MCF 10A (cell line): ENCODE measurements at regions of chr3 and their contacts with region 1.

Region 1: DNA sequence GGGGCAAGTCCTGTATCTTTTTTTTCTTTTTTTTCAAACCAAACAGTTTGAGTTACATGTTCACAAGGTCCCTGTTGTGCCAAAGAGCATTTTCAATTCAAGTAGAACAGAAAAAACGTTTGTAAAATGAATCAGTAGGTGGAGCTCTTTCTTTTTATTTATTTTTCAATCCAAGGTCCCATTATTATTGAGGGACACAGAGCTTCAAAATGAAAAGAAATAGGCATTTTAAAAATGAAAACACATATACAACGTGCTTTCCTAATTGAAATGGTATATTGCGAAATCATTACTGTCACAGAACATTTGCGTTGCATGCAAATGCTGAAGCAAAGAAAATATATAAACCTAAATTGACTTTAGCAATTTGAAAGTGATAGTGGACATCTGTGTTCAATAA is 711.0 kb downstream of the MECOM start:
- DNase-seq: peak; percentile 36
- H3K4me3 Mint-ChIP-seq: no peak overlapping the region
- H3K27ac Mint-ChIP-seq: no peak overlapping the region
- H3K4me1 Mint-ChIP-seq: peaks cover 5% of the 10 kb centered on the region
- H3K27me3 Mint-ChIP-seq: no peaks in the 10 kb centered on the region
- CTCF ChIP-seq: peak; percentile 45

Region 2: GRCh38 chr3:168865022-168865551 is 87.5 kb before region 1 on chr3:
- CTCF ChIA-PET with region 1: interaction called, 21 read pairs
- POLR2A ChIA-PET with region 1: interaction called, 5 read pairs
- intact Hi-C with region 1: no loop called
- DNase-seq: peak; percentile 41
- H3K4me3 Mint-ChIP-seq: no peak overlapping the region
- H3K27ac Mint-ChIP-seq: no peak overlapping the region
- H3K4me1 Mint-ChIP-seq: no peaks in the 10 kb centered on the region
- H3K27me3 Mint-ChIP-seq: peaks cover 59% of the 10 kb centered on the region
- CTCF ChIP-seq: peak; percentile 65

Region 3: DNA sequence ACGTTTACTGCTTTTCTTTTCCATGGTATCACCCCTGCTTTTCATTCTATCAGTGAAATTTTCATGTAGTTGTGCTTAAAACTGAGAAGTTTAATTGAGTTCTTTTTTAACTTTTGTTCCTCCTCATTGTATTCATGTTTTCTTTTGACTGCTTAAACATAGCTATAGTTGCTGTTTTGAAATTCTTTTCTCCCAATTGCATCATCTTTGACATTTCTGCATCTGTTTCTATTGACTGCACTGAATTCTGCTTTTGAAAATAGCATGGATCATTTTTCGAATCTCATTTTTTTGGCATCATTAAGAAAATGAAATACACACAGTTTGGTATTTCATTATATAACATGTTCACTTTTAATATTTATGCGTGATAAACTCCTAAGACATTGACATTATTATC is 16.1 kb after region 1 on chr3:
- CTCF ChIA-PET with region 1: interaction called, 13 read pairs
- POLR2A ChIA-PET with region 1: no interaction called
- intact Hi-C with region 1: no loop called
- DNase-seq: no peak
- H3K4me3 Mint-ChIP-seq: no peak overlapping the region
- H3K27ac Mint-ChIP-seq: peak overlapping the region; percentile 9
- H3K4me1 Mint-ChIP-seq: no peaks in the 10 kb centered on the region
- H3K27me3 Mint-ChIP-seq: no peaks in the 10 kb centered on the region
- CTCF ChIP-seq: no peak

Region 4: DNA sequence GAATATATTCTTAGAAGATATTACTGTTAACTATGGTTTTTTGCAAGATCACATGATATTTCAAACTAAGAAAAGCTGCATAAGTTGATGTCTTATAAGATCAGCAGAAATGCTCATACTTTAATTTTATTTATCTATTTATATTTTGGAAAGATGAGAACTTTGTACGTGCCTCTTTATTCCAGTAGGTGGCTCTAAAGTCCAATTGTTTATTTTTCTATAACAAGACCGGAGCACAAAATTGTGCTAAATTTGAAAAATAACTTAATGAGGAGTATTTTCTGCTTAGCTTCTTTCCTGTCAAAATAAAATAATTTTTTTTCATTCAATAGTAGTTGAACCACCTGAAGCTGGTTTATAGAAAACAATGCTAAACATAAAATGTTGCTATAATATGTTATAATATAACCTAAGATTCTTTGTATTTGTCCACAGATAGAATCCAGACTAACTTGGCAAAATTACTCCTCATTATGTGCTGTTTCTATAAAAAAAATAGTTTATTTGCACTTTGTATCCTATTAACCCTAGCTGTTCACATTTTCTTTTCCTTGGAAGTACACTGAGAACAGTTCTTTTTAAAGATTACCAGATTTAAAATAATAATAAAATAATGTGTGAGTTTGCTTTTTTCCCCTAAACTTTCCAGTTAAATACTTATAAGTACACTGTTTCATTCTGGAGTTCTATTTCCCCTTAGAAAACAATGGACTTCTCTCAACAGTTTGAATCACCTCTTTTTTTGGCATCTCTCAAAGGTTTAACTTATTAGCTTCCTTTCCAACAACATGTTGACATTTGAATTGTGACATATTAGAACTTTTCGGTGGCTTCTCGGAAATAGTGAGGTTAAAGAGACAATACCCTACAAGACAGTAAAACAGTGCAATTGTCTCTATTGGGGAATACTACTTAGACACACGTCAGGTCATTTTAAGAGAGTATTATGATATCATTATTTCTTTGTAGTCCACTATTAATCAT is 180.9 kb after region 1 on chr3:
- CTCF ChIA-PET with region 1: interaction called, 10 read pairs
- POLR2A ChIA-PET with region 1: interaction called, 3 read pairs
- intact Hi-C with region 1: loop called (anchors 5 kb)
- DNase-seq: peak; percentile 33
- H3K4me3 Mint-ChIP-seq: no peak overlapping the region
- H3K27ac Mint-ChIP-seq: peak overlapping the region; percentile 6
- H3K4me1 Mint-ChIP-seq: peaks cover 5% of the 10 kb centered on the region
- H3K27me3 Mint-ChIP-seq: no peaks in the 10 kb centered on the region
- CTCF ChIP-seq: peak; percentile 49

Region 5: GRCh38 chr3:169138849-169139420 is 186.4 kb after region 1 on chr3:
- CTCF ChIA-PET with region 1: interaction called, 10 read pairs
- POLR2A ChIA-PET with region 1: interaction called, 3 read pairs
- intact Hi-C with region 1: loop called (anchors 5 kb)
- DNase-seq: no peak
- H3K4me3 Mint-ChIP-seq: no peak overlapping the region
- H3K27ac Mint-ChIP-seq: no peak overlapping the region
- H3K4me1 Mint-ChIP-seq: peaks cover 6% of the 10 kb centered on the region
- H3K27me3 Mint-ChIP-seq: no peaks in the 10 kb centered on the region
- CTCF ChIP-seq: no peak

Region 6: GRCh38 chr3:169295126-169295525 is 342.6 kb after region 1 on chr3:
- CTCF ChIA-PET with region 1: interaction called, 6 read pairs
- POLR2A ChIA-PET with region 1: no interaction called
- intact Hi-C with region 1: loop called (anchors 5 kb)
- DNase-seq: peak; percentile 33
- H3K4me3 Mint-ChIP-seq: no peak overlapping the region
- H3K27ac Mint-ChIP-seq: no peak overlapping the region
- H3K4me1 Mint-ChIP-seq: no peaks in the 10 kb centered on the region
- H3K27me3 Mint-ChIP-seq: no peaks in the 10 kb centered on the region
- CTCF ChIP-seq: peak; percentile 52

Region 7: GRCh38 chr3:169744366-169745054 is 792.0 kb after region 1 on chr3:
- CTCF ChIA-PET with region 1: interaction called, 10 read pairs
- POLR2A ChIA-PET with region 1: no interaction called
- intact Hi-C with region 1: no loop called
- DNase-seq: no peak
- H3K4me3 Mint-ChIP-seq: no peak overlapping the region
- H3K27ac Mint-ChIP-seq: no peak overlapping the region
- H3K4me1 Mint-ChIP-seq: peaks cover 9% of the 10 kb centered on the region
- H3K27me3 Mint-ChIP-seq: no peaks in the 10 kb centered on the region
- CTCF ChIP-seq: peak; percentile 24